Caco-2 (cell line): ENCODE measurements at regions of chr1 and their contacts with region 1.

Region 1: DNA sequence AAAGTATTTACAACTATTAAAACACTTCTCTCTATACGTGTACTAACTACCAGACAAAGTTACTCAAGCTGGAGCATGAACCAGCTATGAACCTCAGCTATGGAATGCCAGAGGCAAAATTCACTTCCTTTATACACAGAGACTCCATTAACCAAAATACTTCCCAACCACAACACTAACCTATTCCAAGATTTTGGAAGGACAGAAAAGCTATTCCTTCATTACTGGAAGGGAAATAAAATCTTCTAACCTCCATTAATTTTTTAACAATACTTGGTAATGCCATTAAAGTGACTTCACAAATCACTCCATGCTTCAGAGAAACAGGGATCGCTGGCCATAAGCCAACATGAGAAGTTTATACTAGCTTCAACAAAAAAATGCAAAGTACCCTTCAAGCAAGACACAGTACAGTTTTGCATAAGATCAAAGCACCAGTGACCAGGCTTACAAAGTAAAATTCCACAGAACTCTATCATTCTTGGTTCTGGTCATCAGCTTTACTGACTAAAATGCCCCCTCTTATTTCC is 58.0 kb downstream of the PUM1 start:
- DNase-seq: no peak
- H3K4me3 ChIP-seq: no peak overlapping the region
- H3K4me3 Mint-ChIP-seq: no peak overlapping the region
- H3K27ac Mint-ChIP-seq: no peak overlapping the region
- H3K4me1 ChIP-seq: peaks cover 63% of the 10 kb centered on the region
- H3K4me1 Mint-ChIP-seq: peaks cover 43% of the 10 kb centered on the region
- H3K27me3 ChIP-seq: no peaks in the 10 kb centered on the region
- H3K27me3 Mint-ChIP-seq: no peaks in the 10 kb centered on the region
- CTCF ChIP-seq: no peak

Region 2: GRCh38 chr1:30919025-30919881 is 88.3 kb before region 1 on chr1:
- CTCF ChIA-PET with region 1: no interaction called
- POLR2A ChIA-PET with region 1: no interaction called
- intact Hi-C with region 1: no loop called
- DNase-seq: no peak
- H3K4me3 ChIP-seq: no peak overlapping the region
- H3K4me3 Mint-ChIP-seq: no peak overlapping the region
- H3K27ac Mint-ChIP-seq: no peak overlapping the region
- H3K4me1 ChIP-seq: no peaks in the 10 kb centered on the region
- H3K4me1 Mint-ChIP-seq: no peaks in the 10 kb centered on the region
- H3K27me3 ChIP-seq: no peaks in the 10 kb centered on the region
- H3K27me3 Mint-ChIP-seq: no peaks in the 10 kb centered on the region
- CTCF ChIP-seq: no peak

Region 3: DNA sequence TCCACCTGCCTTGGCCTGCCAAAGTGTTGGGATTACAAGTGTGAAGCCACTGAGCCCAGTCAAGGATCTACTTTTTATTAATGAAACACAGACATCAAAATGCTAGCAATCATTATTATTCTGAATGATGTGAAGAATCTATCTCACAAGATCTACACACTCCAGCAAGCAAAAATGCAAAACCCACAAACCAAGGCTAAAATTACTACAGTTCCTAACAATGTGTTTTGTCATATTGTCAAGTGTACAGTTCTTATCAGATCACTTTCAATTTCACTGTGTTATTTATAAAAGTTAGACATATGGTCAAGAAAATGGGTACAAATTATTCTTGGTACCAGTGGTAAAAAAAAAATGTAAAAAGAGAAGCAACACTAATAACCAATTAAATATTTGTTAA is 37.6 kb before region 1 on chr1:
- CTCF ChIA-PET with region 1: no interaction called
- POLR2A ChIA-PET with region 1: no interaction called
- intact Hi-C with region 1: loop called (anchors 1 kb)
- DNase-seq: no peak
- H3K4me3 ChIP-seq: no peak overlapping the region
- H3K4me3 Mint-ChIP-seq: no peak overlapping the region
- H3K27ac Mint-ChIP-seq: no peak overlapping the region
- H3K4me1 ChIP-seq: peaks cover 3% of the 10 kb centered on the region; the same call in 1 of the 2 replicates
- H3K4me1 Mint-ChIP-seq: peaks cover 4% of the 10 kb centered on the region
- H3K27me3 ChIP-seq: no peaks in the 10 kb centered on the region
- H3K27me3 Mint-ChIP-seq: no peaks in the 10 kb centered on the region
- CTCF ChIP-seq: no peak

Region 4: GRCh38 chr1:30981172-30981571 is 26.4 kb before region 1 on chr1:
- CTCF ChIA-PET with region 1: no interaction called
- POLR2A ChIA-PET with region 1: no interaction called
- intact Hi-C with region 1: no loop called
- DNase-seq: no peak
- H3K4me3 ChIP-seq: no peak overlapping the region
- H3K4me3 Mint-ChIP-seq: no peak overlapping the region
- H3K27ac Mint-ChIP-seq: no peak overlapping the region
- H3K4me1 ChIP-seq: 0 out of 2 replicates have a peak, but pooled peaks cover 6% of the 10 kb centered on the region
- H3K4me1 Mint-ChIP-seq: no peaks in the 10 kb centered on the region
- H3K27me3 ChIP-seq: no peaks in the 10 kb centered on the region
- H3K27me3 Mint-ChIP-seq: no peaks in the 10 kb centered on the region
- CTCF ChIP-seq: no peak